Ascending aorta (tissue), 2 donors: ENCODE measurements at regions of chr4 and their contacts with region 1.

Region 1: DNA sequence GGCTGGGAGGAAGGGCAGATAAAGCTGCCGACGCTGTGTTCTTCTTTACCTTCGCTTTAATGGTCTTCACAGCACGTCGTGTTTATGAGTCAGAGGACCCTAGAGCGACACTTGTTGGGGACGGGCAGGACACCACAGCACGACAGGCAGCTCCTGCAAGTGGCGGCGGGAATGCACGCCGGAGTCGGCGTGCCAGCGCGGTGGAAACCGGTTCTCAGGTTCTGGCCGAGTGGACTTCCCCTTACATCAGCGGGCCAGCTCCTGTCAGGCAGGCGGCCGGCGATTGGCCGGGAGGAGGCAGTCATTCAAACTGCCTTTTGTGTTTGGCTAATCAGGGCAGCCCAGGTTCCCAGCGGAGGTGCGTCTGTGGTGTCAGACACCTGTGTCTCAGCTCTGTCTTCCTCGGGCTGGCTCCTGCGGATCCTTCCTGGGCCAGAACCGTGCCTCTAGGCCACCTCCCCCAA is 150.9 kb downstream of the SHROOM3 start:
- DNase-seq: peak; percentile 55 to 93
- H3K4me3 ChIP-seq: peak overlapping the region; percentile 53 to 66
- H3K27ac ChIP-seq: peak overlapping the region; percentile 89 to 96
- H3K4me1 ChIP-seq: peaks cover 0 to 23% of the 10 kb centered on the region in 2 donors
- H3K27me3 ChIP-seq: no peaks in the 10 kb centered on the region
- CTCF ChIP-seq: peak in 2 of 3 experiments; percentile 30 to 34

Region 2: GRCh38 chr4:75752637-75753036 is 833.3 kb before region 1 on chr4:
- intact Hi-C with region 1: no loop called
- DNase-seq: no peak
- H3K4me3 ChIP-seq: no peak overlapping the region
- H3K27ac ChIP-seq: no peak overlapping the region
- H3K4me1 ChIP-seq: no peaks in the 10 kb centered on the region
- H3K27me3 ChIP-seq: no peaks in the 10 kb centered on the region
- CTCF ChIP-seq: no peak

Region 3: GRCh38 chr4:76570141-76570973 is 15.6 kb before region 1 on chr4:
- intact Hi-C with region 1: loop called (anchors 2 kb)
- DNase-seq: no peak
- H3K4me3 ChIP-seq: peak overlapping the region; percentile 18 to 43
- H3K27ac ChIP-seq: peak overlapping the region; percentile 42 to 52
- H3K4me1 ChIP-seq: peaks cover 3 to 22% of the 10 kb centered on the region in 2 donors
- H3K27me3 ChIP-seq: no peaks in the 10 kb centered on the region
- CTCF ChIP-seq: no peak

Region 4: GRCh38 chr4:76611164-76611911 is 25.4 kb after region 1 on chr4:
- intact Hi-C with region 1: loop called (anchors 2 kb)
- DNase-seq: peak in 1 of 2 donors; percentile 83
- H3K4me3 ChIP-seq: peak overlapping the region; percentile 28 to 41
- H3K27ac ChIP-seq: peak overlapping the region; percentile 78 to 85
- H3K4me1 ChIP-seq: peaks cover 15 to 67% of the 10 kb centered on the region in 2 donors
- H3K27me3 ChIP-seq: no peaks in the 10 kb centered on the region
- CTCF ChIP-seq: peak in 2 of 3 experiments; percentile 10 to 20

Region 5: DNA sequence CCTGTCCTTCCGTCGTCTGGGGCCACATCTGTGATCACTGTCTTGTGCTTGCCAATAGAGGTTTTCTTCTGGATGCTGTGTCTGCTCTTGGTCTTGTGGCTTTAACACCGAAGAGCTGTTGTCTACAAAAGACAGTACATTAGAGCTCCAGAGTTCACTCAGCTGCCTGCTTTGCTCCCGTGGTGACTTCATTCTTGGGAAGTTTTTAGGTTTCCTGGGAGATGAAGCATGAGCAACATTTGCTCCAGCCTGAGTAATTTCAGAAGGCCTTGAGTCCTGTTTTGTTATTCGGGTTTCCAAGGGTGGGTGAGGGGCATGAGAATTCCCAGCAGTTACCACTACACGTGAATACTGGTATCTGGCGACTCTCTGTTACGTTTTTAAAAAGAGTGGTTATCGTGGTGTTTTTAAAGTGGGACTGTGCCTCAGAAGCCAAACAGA is 38.3 kb after region 1 on chr4:
- intact Hi-C with region 1: loop called (anchors 5 kb)
- DNase-seq: peak; percentile 30 to 92
- H3K4me3 ChIP-seq: peak overlapping the region in 1 of 2 donors; percentile 34
- H3K27ac ChIP-seq: peak overlapping the region; percentile 84 to 86
- H3K4me1 ChIP-seq: peaks cover 15 to 50% of the 10 kb centered on the region in 2 donors
- H3K27me3 ChIP-seq: no peaks in the 10 kb centered on the region
- CTCF ChIP-seq: no peak

Region 6: GRCh38 chr4:76689241-76689817 is 103.4 kb after region 1 on chr4:
- intact Hi-C with region 1: loop called (anchors 2 kb)
- DNase-seq: peak in 1 of 2 donors; percentile 71
- H3K4me3 ChIP-seq: peak overlapping the region; percentile 64 to 97
- H3K27ac ChIP-seq: peak overlapping the region; percentile 89 to 98
- H3K4me1 ChIP-seq: peaks cover 0 to 28% of the 10 kb centered on the region in 2 donors
- H3K27me3 ChIP-seq: no peaks in the 10 kb centered on the region
- CTCF ChIP-seq: peak in 1 of 3 experiments; percentile 19

Region 7: GRCh38 chr4:76738086-76738931 is 152.4 kb after region 1 on chr4:
- intact Hi-C with region 1: loop called (anchors 2 kb)
- DNase-seq: peak; percentile 27 to 92
- H3K4me3 ChIP-seq: peak overlapping the region in 1 of 2 donors; percentile 34
- H3K27ac ChIP-seq: peak overlapping the region; percentile 92 to 97
- H3K4me1 ChIP-seq: peaks cover 21 to 44% of the 10 kb centered on the region in 2 donors
- H3K27me3 ChIP-seq: no peaks in the 10 kb centered on the region
- CTCF ChIP-seq: no peak

Region 8: DNA sequence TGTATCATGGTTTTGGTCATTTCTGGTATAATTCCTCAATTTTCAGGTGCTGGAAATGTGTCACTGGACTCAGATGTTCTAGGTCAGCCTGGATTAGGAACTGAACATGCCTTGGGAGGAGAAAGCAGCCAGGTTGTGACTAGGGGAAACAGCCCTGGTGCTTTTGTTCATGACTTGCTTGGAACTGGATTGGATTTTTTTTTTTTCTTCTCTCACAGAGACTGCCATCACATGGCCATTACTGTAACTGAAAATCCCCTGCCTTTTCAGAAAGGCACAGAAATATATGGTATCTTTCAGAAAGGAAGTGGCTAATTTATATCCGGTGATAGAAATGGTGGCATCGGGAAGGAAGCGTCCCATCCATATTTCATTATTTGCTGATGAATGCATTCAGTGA is 398.2 kb after region 1 on chr4:
- intact Hi-C with region 1: loop called (anchors 10 kb)
- DNase-seq: no peak
- H3K4me3 ChIP-seq: no peak overlapping the region
- H3K27ac ChIP-seq: peak overlapping the region; percentile 59 to 64
- H3K4me1 ChIP-seq: peaks cover 4 to 38% of the 10 kb centered on the region in 2 donors
- H3K27me3 ChIP-seq: no peaks in the 10 kb centered on the region
- CTCF ChIP-seq: peak in 2 of 3 experiments; percentile 23 to 41